ENCODE measurements at regions of chr11 and their contacts with region 1.

Region 1: GRCh38 chr11:118705111-118705741 is 25.8 kb upstream of the TREH start:
- H3K4me3 Mint-ChIP-seq: peak overlapping the region; percentile 30
- H3K27ac Mint-ChIP-seq: peak overlapping the region; percentile 77
- H3K4me1 Mint-ChIP-seq: peaks cover 38% of the 10 kb centered on the region
- H3K27me3 Mint-ChIP-seq: peaks cover 27% of the 10 kb centered on the region

Region 2: DNA sequence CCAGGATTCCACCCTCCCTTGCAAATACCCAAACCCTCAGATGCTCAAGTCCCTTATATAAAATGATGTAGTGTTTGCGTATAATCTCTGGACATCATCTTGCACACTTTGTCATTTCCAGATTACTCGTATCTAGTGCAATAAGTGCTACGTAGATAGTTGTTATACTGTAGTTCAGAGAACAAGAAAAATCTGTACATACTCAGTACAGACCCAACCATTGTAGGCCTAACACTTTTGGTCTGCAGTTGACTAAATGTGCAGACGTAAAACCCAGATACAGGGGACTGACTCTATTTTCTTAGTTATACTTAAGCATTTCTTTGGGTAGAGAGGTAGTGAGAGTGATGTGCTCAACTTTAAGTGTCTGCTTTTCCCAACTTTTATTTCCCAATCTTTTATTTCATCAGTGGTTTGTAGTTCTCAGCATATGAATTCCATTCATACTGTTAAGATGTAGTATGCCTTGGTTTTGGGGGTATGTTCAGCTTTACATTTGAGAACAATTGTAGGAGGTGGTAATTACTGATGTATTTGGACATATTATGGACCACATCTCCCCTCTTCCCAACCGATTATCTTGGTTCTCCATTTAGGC is 41.9 kb after region 1 on chr11:
- intact Hi-C with region 1: loop called (anchors 5 kb)
- H3K4me3 Mint-ChIP-seq: no peak overlapping the region
- H3K27ac Mint-ChIP-seq: no peak overlapping the region
- H3K4me1 Mint-ChIP-seq: peaks cover 12% of the 10 kb centered on the region
- H3K27me3 Mint-ChIP-seq: no peaks in the 10 kb centered on the region

Region 3: DNA sequence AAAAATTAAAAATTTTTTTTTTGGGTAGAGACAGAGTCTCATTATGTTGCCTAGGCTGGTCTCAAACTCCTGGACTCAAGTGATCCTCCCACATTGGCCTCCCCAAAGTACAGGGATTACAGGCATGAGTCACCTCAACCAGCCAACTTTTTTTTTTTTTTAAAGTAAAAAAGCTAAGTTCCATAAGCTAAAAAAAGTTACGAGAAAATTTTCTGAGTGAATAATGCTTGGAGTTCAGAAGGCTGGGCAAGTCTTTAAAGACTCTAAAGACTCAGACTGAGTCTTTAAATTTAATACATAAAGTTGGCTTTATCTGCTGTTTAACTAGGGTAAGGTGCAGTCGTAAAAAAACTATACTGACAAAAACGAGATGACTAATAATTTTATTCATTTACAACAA is 80.1 kb after region 1 on chr11:
- intact Hi-C with region 1: no loop called
- H3K4me3 Mint-ChIP-seq: no peak overlapping the region
- H3K27ac Mint-ChIP-seq: no peak overlapping the region
- H3K4me1 Mint-ChIP-seq: peaks cover 33% of the 10 kb centered on the region
- H3K27me3 Mint-ChIP-seq: no peaks in the 10 kb centered on the region